ENCODE measurements at regions of chr12 and their contacts with region 1.

Region 1: DNA sequence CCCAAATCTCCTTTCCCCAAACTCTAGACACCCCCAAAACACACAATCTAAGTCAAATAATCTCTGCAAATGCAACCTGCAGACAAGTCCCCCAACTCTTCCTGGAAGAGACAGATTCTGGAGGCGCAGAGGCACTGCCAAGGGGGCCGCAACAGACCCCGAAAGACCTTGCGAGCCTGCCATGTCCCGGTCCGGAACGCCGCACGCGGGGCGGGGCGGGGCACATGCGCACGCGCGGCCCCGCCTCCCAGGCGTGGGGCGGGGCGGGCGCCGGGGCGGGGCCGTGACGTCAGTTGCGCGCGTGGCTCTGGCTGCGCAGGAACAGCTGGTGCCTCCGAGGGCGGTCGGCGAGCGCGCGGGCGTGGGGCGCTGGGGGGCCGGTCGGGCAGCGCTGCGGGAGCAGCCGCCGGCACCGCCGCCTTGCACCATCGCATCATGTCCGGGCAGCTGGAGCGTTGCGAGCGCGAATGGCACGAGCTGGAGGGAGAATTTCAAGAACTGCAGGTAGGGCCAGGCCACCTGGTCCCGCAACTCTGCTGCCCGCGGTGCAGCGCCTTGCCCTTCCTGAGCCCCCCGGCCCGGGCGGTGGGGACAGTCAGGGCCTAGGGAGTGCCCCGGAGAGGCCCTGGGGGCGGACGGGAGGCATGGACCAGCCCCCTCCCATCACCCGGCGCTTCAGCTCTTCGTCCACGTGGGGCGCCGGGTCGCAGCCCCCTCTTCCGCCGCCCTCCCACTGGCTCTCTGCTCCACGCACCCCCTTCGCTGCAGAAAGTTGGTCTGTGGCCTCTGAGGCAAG is at the start of gene TMEM120B:
- DNase-seq: peak; percentile 73 to 85
- ATAC-seq: peak; percentile 67 to 78
- H3K4me3 ChIP-seq: peak within 1 kb of the TSS; percentile 87 to 91 (median 90)
- H3K27ac ChIP-seq: peak within 1 kb of the TSS; percentile 93 to 100 (median 99)
- H3K4me1 ChIP-seq: peaks cover 38 to 48% of the 10 kb centered on the region in 2 donors
- H3K27me3 ChIP-seq: no peaks in the 10 kb centered on the region
- CTCF ChIP-seq: peak in 1 of 5 experiments; percentile 26
- POLR2A ChIP-seq: peak; percentile 98 to 99
- total RNA-seq, gene TMEM120B: 5.9 to 11.2 (median 6.4) TPM

Region 2: GRCh38 chr12:121423682-121424623 is 288.7 kb before region 1 on chr12:
- in situ Hi-C with region 1: no loop called
- intact Hi-C with region 1: no loop called
- DNase-seq: peak; percentile 93 to 96
- ATAC-seq: peak; percentile 90 to 95
- H3K4me3 ChIP-seq: no peak overlapping the region
- H3K27ac ChIP-seq: peak overlapping the region; percentile 81 to 97 (median 94)
- H3K4me1 ChIP-seq: peaks cover 17 to 28% of the 10 kb centered on the region in 2 donors
- H3K27me3 ChIP-seq: no peaks in the 10 kb centered on the region
- CTCF ChIP-seq: peak in 1 of 5 experiments; percentile 22
- POLR2A ChIP-seq: peak; percentile 43 to 80

Region 3: GRCh38 chr12:121461048-121461447 is 251.6 kb before region 1 on chr12:
- in situ Hi-C with region 1: no loop called
- intact Hi-C with region 1: no loop called
- DNase-seq: no peak
- ATAC-seq: no peak
- H3K4me3 ChIP-seq: no peak overlapping the region
- H3K27ac ChIP-seq: no peak overlapping the region
- H3K4me1 ChIP-seq: peaks cover 2 to 9% of the 10 kb centered on the region in 2 donors
- H3K27me3 ChIP-seq: no peaks in the 10 kb centered on the region
- CTCF ChIP-seq: no peak
- POLR2A ChIP-seq: no peak

Region 4: GRCh38 chr12:121741743-121742142 is 29.1 kb after region 1 on chr12:
- in situ Hi-C with region 1: no loop called
- intact Hi-C with region 1: loop called (anchors 2 kb)
- DNase-seq: no peak
- ATAC-seq: no peak
- H3K4me3 ChIP-seq: no peak overlapping the region
- H3K27ac ChIP-seq: peak overlapping the region; percentile 51 to 65 (median 59)
- H3K4me1 ChIP-seq: peaks cover 4 to 5% of the 10 kb centered on the region in 2 donors
- H3K27me3 ChIP-seq: no peaks in the 10 kb centered on the region
- CTCF ChIP-seq: no peak
- POLR2A ChIP-seq: no peak

Region 5: DNA sequence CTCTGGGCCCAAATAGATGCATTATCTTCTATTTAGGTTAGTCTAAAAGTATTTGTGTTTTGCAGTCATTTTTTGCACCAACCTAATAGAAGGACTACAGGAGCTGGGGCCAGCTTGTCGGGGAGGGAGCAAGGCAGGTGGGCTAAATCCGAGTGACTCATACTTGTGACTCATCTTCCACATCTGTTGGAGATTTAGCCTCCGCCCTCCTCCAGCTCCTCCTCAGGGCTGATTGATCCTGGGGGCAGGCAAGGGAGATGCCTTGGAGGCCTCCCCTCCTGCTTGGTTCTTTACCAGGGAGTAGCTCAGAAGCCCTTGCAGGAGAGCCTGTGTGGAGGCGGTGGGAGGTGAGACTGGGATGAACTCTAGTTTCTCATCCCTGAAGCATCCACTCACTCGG is 52.9 kb after region 1 on chr12:
- in situ Hi-C with region 1: loop called in 1 of 4 experiments (anchors 10 kb)
- intact Hi-C with region 1: no loop called
- DNase-seq: no peak
- ATAC-seq: no peak
- H3K4me3 ChIP-seq: no peak overlapping the region
- H3K27ac ChIP-seq: no peak overlapping the region
- H3K4me1 ChIP-seq: peaks cover 23 to 29% of the 10 kb centered on the region in 2 donors
- H3K27me3 ChIP-seq: no peaks in the 10 kb centered on the region
- CTCF ChIP-seq: no peak
- POLR2A ChIP-seq: no peak

Region 6: GRCh38 chr12:121786441-121786825 is 73.8 kb after region 1 on chr12:
- in situ Hi-C with region 1: no loop called
- intact Hi-C with region 1: no loop called
- DNase-seq: peak; percentile 58 to 81
- ATAC-seq: peak; percentile 63 to 70
- H3K4me3 ChIP-seq: no peak overlapping the region
- H3K27ac ChIP-seq: peak overlapping the region in 2 of 4 donors; percentile 21 to 48
- H3K4me1 ChIP-seq: peaks cover 10 to 14% of the 10 kb centered on the region in 2 donors
- H3K27me3 ChIP-seq: no peaks in the 10 kb centered on the region
- CTCF ChIP-seq: no peak
- POLR2A ChIP-seq: no peak

Region 7: DNA sequence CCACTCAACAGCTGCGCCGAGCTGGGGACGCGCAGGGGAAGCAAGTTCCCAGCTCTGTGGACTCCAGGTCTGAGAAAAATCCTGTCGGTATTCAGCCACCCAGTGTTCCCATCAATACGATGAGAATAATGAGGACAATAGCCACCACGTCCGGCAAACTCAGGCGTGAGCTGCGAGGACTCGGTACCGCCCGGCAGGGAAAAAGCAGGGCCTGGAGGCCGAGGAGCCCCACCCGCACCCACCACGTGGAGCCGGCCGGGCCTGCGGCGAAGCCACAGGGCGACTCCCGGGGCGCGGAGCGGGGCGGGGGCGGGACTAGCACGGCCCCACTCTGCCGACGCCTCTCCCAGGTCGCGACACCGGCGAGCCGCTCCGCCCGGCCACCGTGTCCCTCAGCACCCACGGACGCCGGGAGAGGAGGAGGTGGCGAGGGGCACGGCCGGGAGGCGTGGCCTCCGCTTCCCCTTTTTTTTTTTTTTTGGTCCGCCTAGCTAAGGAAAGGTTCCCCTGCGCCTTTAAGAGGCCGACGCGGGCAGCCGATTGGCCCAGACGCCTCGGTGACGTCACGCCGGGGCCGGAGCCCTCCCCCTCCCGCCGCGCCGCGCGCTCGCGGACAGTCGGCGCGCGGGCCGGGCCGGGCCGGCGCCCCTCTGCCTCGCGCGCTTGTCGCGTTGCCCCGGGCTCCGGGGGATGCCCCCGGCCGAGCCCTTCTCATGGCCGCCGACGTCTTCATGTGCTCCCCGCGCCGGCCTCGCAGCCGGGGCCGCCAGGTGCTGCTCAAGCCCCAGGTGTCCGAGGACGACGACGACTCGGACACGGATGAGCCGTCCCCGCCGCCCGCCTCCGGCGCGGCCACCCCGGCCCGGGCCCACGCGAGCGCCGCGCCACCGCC is 365.7 kb after region 1 on chr12 and contains the start of gene MLXIP:
- in situ Hi-C with region 1: no loop called
- intact Hi-C with region 1: loop called (anchors 10 kb)
- DNase-seq: peak; percentile 90 to 95
- ATAC-seq: peak; percentile 70 to 71
- H3K4me3 ChIP-seq: peak within 1 kb of the TSS; percentile 65 to 86 (median 76)
- H3K27ac ChIP-seq: peak within 1 kb of the TSS; percentile 91 to 97 (median 96)
- H3K4me1 ChIP-seq: peaks cover 41 to 43% of the 10 kb centered on the region in 2 donors
- H3K27me3 ChIP-seq: no peaks in the 10 kb centered on the region
- CTCF ChIP-seq: no peak
- POLR2A ChIP-seq: peak; percentile 99 to 100
- total RNA-seq, gene MLXIP: 36.6 to 89.4 (median 79.7) TPM